HepG2 (cell line): ENCODE measurements at regions of chr5 and their contacts with region 1.

Region 1: DNA sequence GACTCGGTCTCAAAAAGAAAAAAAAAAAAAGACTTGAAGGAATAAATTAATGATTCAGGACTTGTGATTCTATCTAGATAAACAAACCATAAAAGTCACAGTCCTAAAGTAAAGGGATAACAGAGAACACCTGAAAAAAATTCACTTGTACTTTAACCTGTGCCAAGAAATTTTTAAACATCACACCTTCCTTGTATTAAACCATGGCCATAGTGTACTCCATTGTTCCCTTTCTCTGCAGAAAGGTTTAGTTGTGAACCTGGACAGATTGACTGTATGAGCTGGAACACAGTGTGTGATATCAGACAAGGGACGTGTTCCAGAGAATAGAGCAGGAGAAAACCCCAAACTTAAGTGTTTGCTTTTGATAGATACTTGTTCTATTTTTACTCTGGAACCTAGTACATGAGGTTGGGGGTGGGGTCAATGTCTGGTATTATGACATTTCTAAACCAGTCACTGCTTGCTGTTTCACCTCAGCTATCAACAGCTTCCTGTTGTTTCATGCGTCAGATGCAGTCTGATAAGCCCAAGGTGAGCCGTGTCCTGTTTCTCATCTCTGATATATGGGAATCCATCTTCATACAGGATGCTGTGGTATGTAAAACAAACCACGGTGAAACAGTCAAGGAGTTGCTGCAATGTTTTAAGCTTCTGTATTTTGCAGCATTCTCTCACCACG is 62.5 kb upstream of the ITGA1 start:
- DNase-seq: peak; percentile 20
- ATAC-seq: no peak; the same call in 2 of the 3 replicates
- H3K4me3 ChIP-seq: no peak overlapping the region
- H3K27ac ChIP-seq: no peak overlapping the region
- H3K4me1 ChIP-seq: peaks cover 36% of the 10 kb centered on the region
- H3K27me3 ChIP-seq: no peaks in the 10 kb centered on the region
- CTCF ChIP-seq: no peak
- EP300 ChIP-seq: no peak
- POLR2A ChIP-seq: no peak
- RAD21 ChIP-seq: no peak

Region 2: DNA sequence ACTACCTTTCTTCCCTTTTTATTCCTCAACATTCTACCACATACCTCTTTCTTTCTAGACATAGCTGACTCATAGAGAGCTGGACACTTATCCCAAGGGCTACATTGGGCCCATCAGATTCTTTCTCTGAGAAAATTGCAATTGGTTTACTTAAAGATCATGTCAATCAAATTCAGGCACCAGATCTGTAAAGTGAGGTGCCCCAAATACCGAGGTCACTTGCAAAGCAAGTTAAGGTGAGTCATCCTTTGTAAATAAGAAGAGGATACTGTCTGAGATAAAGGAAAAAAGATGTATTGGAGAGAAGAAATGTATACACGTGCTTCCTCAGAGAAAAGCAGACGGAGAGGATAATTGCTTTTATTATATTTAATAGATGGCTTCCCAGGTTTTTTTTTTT is 300.8 kb before region 1 on chr5:
- CTCF ChIA-PET with region 1: no interaction called
- POLR2A ChIA-PET with region 1: no interaction called
- in situ Hi-C with region 1: no loop called
- intact Hi-C with region 1: no loop called
- DNase-seq: no peak
- ATAC-seq: no peak
- H3K4me3 ChIP-seq: no peak overlapping the region
- H3K27ac ChIP-seq: no peak overlapping the region
- H3K4me1 ChIP-seq: no peaks in the 10 kb centered on the region
- H3K27me3 ChIP-seq: no peaks in the 10 kb centered on the region; a peak in 1 of 5 replicates
- CTCF ChIP-seq: no peak
- EP300 ChIP-seq: no peak
- POLR2A ChIP-seq: no peak
- RAD21 ChIP-seq: no peak

Region 3: DNA sequence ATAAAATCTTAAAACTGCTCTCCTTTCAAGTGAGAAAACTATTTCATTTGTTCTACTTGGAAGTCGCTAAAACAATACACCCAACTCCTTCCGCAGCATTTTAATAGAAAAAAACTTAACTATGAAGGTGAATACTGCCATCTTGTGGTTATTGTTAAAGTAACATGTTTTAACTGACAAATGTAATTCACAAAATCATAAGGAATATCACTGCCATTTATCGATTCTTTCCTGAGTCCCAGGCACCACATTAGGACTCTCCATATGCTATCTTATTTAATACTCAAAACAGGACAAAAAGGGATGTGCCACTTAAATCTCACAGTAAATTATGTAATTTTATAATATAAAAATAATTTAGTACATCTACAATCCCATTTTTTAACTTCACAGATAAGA is 68.0 kb before region 1 on chr5:
- CTCF ChIA-PET with region 1: no interaction called
- POLR2A ChIA-PET with region 1: no interaction called
- in situ Hi-C with region 1: no loop called
- intact Hi-C with region 1: no loop called
- DNase-seq: peak; percentile 18
- ATAC-seq: no peak
- H3K4me3 ChIP-seq: no peak overlapping the region
- H3K27ac ChIP-seq: no peak overlapping the region
- H3K4me1 ChIP-seq: no peaks in the 10 kb centered on the region
- H3K27me3 ChIP-seq: no peaks in the 10 kb centered on the region
- CTCF ChIP-seq: peak; percentile 53
- EP300 ChIP-seq: no peak
- POLR2A ChIP-seq: no peak
- RAD21 ChIP-seq: no peak

Region 4: GRCh38 chr5:52787600-52788504 is 62.6 kb after region 1 on chr5 and contains the starts of genes ITGA1 and PELO:
- CTCF ChIA-PET with region 1: no interaction called
- POLR2A ChIA-PET with region 1: no interaction called
- in situ Hi-C with region 1: no loop called
- intact Hi-C with region 1: no loop called
- DNase-seq: peak; percentile 86
- ATAC-seq: peak; percentile 92
- H3K4me3 ChIP-seq: peak within 1 kb of the TSS; percentile 76 to 92 (median 77)
- H3K27ac ChIP-seq: peak within 1 kb of the TSS; percentile 73
- H3K4me1 ChIP-seq: peaks cover 48% of the 10 kb centered on the region
- H3K27me3 ChIP-seq: no peaks in the 10 kb centered on the region; a peak in 1 of 5 replicates
- CTCF ChIP-seq: peak; percentile 86
- EP300 ChIP-seq: no peak; a peak in 1 of 4 replicates
- POLR2A ChIP-seq: peak; percentile 35 to 61; a peak in 3 of 4 replicates
- RAD21 ChIP-seq: peak; percentile 90
- total RNA-seq, gene ITGA1: 11.6 and 23.1 TPM in 2 replicates
- total RNA-seq, gene PELO: 19.0 and 19.5 TPM in 2 replicates

Region 5: GRCh38 chr5:54083851-54084250 is 1358.6 kb after region 1 on chr5:
- CTCF ChIA-PET with region 1: no interaction called
- POLR2A ChIA-PET with region 1: no interaction called
- in situ Hi-C with region 1: no loop called
- intact Hi-C with region 1: loop called (anchors 5 kb)
- DNase-seq: no peak
- ATAC-seq: no peak
- H3K4me3 ChIP-seq: no peak overlapping the region
- H3K27ac ChIP-seq: no peak overlapping the region
- H3K4me1 ChIP-seq: no peaks in the 10 kb centered on the region
- H3K27me3 ChIP-seq: no peaks in the 10 kb centered on the region; a peak in 1 of 5 replicates
- CTCF ChIP-seq: no peak
- EP300 ChIP-seq: no peak
- POLR2A ChIP-seq: no peak
- RAD21 ChIP-seq: no peak